ENCODE measurements at regions of chr5 and their contacts with region 1.

Region 1: GRCh38 chr5:2038321-2039179 is 155.8 kb upstream of the IRX4 start:
- DNase-seq: peak; percentile 65
- H3K4me3 Mint-ChIP-seq: peak overlapping the region; percentile 60
- H3K27ac Mint-ChIP-seq: no peak overlapping the region
- H3K4me1 Mint-ChIP-seq: no peaks in the 10 kb centered on the region
- H3K27me3 Mint-ChIP-seq: peaks cover 25% of the 10 kb centered on the region

Region 2: GRCh38 chr5:1666812-1667588 is 371.6 kb before region 1 on chr5:
- CTCF ChIA-PET with region 1: no interaction called
- intact Hi-C with region 1: loop called (anchors 1 kb)
- DNase-seq: peak; percentile 64
- H3K4me3 Mint-ChIP-seq: peak overlapping the region; percentile 33
- H3K27ac Mint-ChIP-seq: no peak overlapping the region
- H3K4me1 Mint-ChIP-seq: peaks cover 18% of the 10 kb centered on the region
- H3K27me3 Mint-ChIP-seq: peaks cover 60% of the 10 kb centered on the region

Region 3: DNA sequence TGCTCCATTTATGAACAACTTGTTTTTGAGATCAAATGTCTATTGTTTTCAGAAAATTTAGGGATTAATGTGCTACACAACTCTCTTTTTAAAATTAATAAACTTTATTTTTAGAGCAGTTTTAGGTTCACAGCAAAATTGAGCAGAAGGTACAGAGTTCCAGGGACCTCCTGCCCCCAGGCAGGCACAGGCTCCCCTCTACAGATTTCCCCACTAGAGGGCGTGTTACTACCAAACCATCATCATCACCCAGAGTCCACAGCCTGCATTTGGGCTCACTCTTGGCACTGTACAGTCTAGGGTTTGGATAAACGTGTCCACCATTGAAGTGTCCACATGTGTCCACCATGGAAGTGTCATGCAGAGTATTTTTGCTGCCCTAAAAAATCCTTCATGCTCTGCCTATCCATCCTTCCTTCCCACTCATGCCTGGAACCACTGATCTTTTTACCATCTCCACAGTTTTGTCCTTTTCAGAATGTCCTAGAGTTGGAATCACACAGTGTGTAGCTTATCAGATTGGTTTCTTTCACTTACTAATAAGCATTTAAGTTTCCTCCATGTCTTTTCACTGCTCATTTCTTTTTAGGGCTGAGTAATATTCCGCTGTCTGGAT is 300.7 kb before region 1 on chr5:
- CTCF ChIA-PET with region 1: no interaction called
- intact Hi-C with region 1: loop called (anchors 5 kb)
- DNase-seq: peak; percentile 68
- H3K4me3 Mint-ChIP-seq: no peak overlapping the region
- H3K27ac Mint-ChIP-seq: no peak overlapping the region
- H3K4me1 Mint-ChIP-seq: no peaks in the 10 kb centered on the region
- H3K27me3 Mint-ChIP-seq: peaks cover 17% of the 10 kb centered on the region

Region 4: DNA sequence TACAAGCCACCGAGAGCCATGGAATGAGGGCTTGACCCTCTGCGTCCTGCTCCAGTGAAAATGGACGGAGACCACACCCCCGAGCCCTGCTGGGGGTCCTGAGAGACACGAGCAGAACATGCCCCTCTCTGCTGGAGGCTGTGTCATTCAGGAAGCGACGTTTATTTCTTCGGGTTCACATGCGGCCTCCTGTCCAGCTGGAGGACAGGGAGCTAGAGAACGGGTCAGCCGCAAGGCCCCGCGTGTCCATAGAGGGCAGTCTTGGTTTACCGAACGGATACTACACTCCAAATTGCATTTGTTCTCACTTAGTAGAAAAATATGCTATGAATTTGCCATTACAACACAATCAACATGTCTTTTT is 275.0 kb before region 1 on chr5:
- CTCF ChIA-PET with region 1: interaction called, 3 read pairs
- intact Hi-C with region 1: loop called (anchors 2 kb)
- DNase-seq: peak; percentile 49
- H3K4me3 Mint-ChIP-seq: no peak overlapping the region
- H3K27ac Mint-ChIP-seq: no peak overlapping the region
- H3K4me1 Mint-ChIP-seq: no peaks in the 10 kb centered on the region
- H3K27me3 Mint-ChIP-seq: peaks cover 7% of the 10 kb centered on the region

Region 5: DNA sequence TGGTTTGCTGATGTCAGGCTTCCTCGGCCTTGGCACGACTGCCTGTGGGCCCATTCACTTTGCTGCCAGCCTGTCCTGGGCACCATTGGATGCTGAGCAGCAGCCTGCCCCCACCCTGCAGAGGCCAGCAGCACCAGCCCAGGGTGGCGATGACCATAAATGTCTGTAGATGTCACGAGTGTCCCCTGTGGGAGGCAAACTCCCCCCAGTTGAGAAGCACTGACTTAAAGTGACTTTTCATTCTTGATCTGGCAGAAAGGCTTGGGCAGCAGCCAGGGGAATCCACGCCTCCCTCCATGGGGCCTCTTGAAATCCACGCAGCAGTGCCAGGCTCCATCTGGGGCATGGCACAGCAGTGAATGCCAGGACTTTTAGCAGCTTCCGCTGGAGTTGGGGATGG is 177.6 kb before region 1 on chr5:
- CTCF ChIA-PET with region 1: no interaction called
- intact Hi-C with region 1: no loop called
- DNase-seq: no peak
- H3K4me3 Mint-ChIP-seq: no peak overlapping the region
- H3K27ac Mint-ChIP-seq: no peak overlapping the region
- H3K4me1 Mint-ChIP-seq: no peaks in the 10 kb centered on the region
- H3K27me3 Mint-ChIP-seq: peaks cover 12% of the 10 kb centered on the region

Region 6: GRCh38 chr5:2110137-2110933 is 71.8 kb after region 1 on chr5:
- CTCF ChIA-PET with region 1: no interaction called
- intact Hi-C with region 1: no loop called
- DNase-seq: no peak
- H3K4me3 Mint-ChIP-seq: no peak overlapping the region
- H3K27ac Mint-ChIP-seq: no peak overlapping the region
- H3K4me1 Mint-ChIP-seq: no peaks in the 10 kb centered on the region
- H3K27me3 Mint-ChIP-seq: peaks cover 2% of the 10 kb centered on the region

Region 7: GRCh38 chr5:2149196-2149541 is 110.6 kb after region 1 on chr5:
- CTCF ChIA-PET with region 1: no interaction called
- intact Hi-C with region 1: loop called (anchors 1 kb)
- DNase-seq: no peak
- H3K4me3 Mint-ChIP-seq: no peak overlapping the region
- H3K27ac Mint-ChIP-seq: no peak overlapping the region
- H3K4me1 Mint-ChIP-seq: no peaks in the 10 kb centered on the region
- H3K27me3 Mint-ChIP-seq: peaks cover 7% of the 10 kb centered on the region